ENCODE measurements at regions of chr7 and their contacts with region 1.

Region 1: GRCh38 chr7:876167-876967 is at the start of gene GET4:
- DNase-seq: peak; percentile 96 to 98
- H3K4me3 ChIP-seq: peak within 1 kb of the TSS; percentile 73 to 74
- H3K27ac ChIP-seq: peak within 1 kb of the TSS; percentile 87 to 91
- H3K4me1 ChIP-seq: peaks cover 10 to 20% of the 10 kb centered on the region in 2 donors
- H3K27me3 ChIP-seq: no peaks in the 10 kb centered on the region
- CTCF ChIP-seq: peak in 3 of 4 experiments; percentile 43 to 56 (median 45)
- POLR2A ChIP-seq: peak; percentile 87 to 93
- total RNA-seq, gene GET4: 6.1 to 39.4 (median 26.7) TPM

Region 2: GRCh38 chr7:786472-787255 is 89.7 kb before region 1 on chr7:
- intact Hi-C with region 1: loop called (anchors 10 kb)
- DNase-seq: peak; percentile 82 to 83
- H3K4me3 ChIP-seq: no peak overlapping the region
- H3K27ac ChIP-seq: peak overlapping the region in 1 of 2 donors; percentile 33
- H3K4me1 ChIP-seq: no peaks in the 10 kb centered on the region
- H3K27me3 ChIP-seq: no peaks in the 10 kb centered on the region
- CTCF ChIP-seq: peak; percentile 89 to 93 (median 92)
- POLR2A ChIP-seq: no peak

Region 3: DNA sequence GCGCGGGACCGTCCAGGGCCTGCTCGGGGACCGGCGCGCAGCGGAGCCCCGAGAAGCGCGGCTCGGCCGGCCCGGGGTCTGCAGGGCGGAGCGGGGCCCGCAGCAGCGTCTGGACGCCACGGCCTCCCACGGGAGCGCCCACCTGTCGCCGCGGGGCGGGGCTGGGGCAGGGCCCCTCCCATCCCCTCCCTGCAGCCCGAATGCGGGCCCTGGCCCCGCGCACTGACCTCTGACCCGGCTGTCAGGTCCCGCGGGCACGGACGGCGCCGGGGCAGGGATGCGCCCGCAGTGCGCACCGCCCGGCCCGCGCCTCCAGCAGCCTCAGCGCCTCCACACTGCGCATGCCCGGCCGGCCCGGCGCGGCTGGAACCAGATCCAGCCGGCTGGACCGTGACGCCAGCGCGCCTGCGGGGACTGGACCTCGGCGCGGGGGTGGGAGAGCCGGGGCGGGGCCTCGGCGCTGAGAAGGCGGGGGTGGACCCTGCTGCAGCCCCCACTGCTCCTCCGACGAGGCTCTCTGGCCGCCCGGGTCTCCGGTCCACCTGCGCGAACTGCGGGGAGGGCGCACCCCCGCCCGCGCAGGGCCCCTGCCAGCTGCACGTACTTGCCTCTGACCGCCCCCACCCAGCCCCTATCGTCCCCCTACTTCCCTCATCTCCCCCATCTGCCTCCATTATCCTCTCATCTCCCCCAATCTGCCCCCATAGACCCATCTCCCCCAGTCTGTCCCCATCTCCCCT is 151.8 kb after region 1 on chr7:
- intact Hi-C with region 1: no loop called
- DNase-seq: peak; percentile 89 to 94
- H3K4me3 ChIP-seq: peak overlapping the region; percentile 29 to 91
- H3K27ac ChIP-seq: peak overlapping the region; percentile 93 to 97
- H3K4me1 ChIP-seq: peaks cover 0 to 16% of the 10 kb centered on the region in 2 donors
- H3K27me3 ChIP-seq: no peaks in the 10 kb centered on the region
- CTCF ChIP-seq: no peak
- POLR2A ChIP-seq: peak; percentile 75 to 82

Measured in uterus (tissue), 4 donors.